Activated CD4-positive, alpha-beta memory T cell treated with anti-CD3 and anti-CD28 coated beads for 36 hours (primary cell): ENCODE measurements at regions of chr22 and their contacts with region 1.

Region 1: GRCh38 chr22:23696326-23696851 is 5.6 kb downstream of the RGL4 start:
- DNase-seq: peak; percentile 90
- H3K4me3 Mint-ChIP-seq: peak overlapping the region; percentile 85
- H3K27ac Mint-ChIP-seq: peak overlapping the region; percentile 96
- H3K4me1 Mint-ChIP-seq: peaks cover 51% of the 10 kb centered on the region
- H3K27me3 Mint-ChIP-seq: no peaks in the 10 kb centered on the region

Region 2: GRCh38 chr22:23685205-23685784 is 11.1 kb before region 1 on chr22:
- CTCF ChIA-PET with region 1: no interaction called
- POLR2A ChIA-PET with region 1: no interaction called
- intact Hi-C with region 1: no loop called
- DNase-seq: no peak
- H3K4me3 Mint-ChIP-seq: no peak overlapping the region
- H3K27ac Mint-ChIP-seq: no peak overlapping the region
- H3K4me1 Mint-ChIP-seq: no peaks in the 10 kb centered on the region
- H3K27me3 Mint-ChIP-seq: no peaks in the 10 kb centered on the region

Region 3: GRCh38 chr22:23716811-23717801 is 20.7 kb after region 1 on chr22:
- CTCF ChIA-PET with region 1: interaction called, 4 read pairs
- POLR2A ChIA-PET with region 1: interaction called, 15 read pairs
- intact Hi-C with region 1: no loop called
- DNase-seq: peak; percentile 85
- H3K4me3 Mint-ChIP-seq: peak overlapping the region; percentile 74
- H3K27ac Mint-ChIP-seq: peak overlapping the region; percentile 54
- H3K4me1 Mint-ChIP-seq: peaks cover 11% of the 10 kb centered on the region
- H3K27me3 Mint-ChIP-seq: no peaks in the 10 kb centered on the region